ENCODE measurements at regions of chr5 and their contacts with region 1.

Region 1: DNA sequence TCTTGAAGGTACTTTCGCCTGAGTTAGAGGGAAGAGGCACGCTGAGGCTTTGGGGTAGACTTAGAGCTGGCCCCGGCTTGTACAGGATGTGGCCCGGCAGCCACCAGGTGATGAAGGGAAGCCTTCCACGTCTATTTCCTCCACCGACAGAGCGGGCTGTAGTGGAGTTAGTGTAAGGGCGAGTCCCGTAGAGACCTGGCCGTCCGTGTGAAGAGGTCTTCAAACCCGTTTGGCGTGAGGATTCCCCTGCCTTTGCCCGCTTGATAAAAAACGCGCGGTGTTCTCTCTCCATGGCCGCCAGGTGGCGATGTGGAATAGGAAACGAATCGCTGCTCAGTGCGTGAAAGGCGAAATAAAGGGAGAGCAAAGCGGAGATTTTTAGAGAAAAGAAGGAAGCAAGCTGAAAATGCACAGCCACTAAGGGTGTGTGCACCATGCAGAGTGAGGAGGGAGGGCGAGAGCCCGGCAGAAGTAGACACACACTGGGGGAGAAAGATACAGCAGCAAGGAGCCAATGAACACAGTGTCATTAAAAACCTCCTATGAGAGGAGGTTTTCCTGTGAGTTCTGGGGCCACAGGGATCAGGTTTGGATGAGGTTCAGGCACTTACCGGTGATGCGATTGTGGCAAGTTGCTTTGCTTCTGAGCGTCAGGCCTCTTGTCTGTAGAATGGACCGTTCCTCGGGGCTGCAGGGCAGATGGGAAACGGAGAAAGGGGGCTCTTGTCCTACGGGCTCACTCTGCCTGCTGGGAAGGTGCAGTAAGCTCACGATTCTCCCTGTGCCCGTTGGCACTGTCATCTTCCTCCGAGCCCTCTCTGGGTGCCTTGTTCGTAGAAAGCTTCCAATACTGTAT is 34.2 kb downstream of the STC2 start:
- DNase-seq: peak; percentile 78
- H3K4me3 Mint-ChIP-seq: peak overlapping the region; percentile 4
- H3K27ac Mint-ChIP-seq: no peak overlapping the region
- H3K4me1 Mint-ChIP-seq: peaks cover 16% of the 10 kb centered on the region
- H3K27me3 Mint-ChIP-seq: peaks cover 89% of the 10 kb centered on the region

Region 2: DNA sequence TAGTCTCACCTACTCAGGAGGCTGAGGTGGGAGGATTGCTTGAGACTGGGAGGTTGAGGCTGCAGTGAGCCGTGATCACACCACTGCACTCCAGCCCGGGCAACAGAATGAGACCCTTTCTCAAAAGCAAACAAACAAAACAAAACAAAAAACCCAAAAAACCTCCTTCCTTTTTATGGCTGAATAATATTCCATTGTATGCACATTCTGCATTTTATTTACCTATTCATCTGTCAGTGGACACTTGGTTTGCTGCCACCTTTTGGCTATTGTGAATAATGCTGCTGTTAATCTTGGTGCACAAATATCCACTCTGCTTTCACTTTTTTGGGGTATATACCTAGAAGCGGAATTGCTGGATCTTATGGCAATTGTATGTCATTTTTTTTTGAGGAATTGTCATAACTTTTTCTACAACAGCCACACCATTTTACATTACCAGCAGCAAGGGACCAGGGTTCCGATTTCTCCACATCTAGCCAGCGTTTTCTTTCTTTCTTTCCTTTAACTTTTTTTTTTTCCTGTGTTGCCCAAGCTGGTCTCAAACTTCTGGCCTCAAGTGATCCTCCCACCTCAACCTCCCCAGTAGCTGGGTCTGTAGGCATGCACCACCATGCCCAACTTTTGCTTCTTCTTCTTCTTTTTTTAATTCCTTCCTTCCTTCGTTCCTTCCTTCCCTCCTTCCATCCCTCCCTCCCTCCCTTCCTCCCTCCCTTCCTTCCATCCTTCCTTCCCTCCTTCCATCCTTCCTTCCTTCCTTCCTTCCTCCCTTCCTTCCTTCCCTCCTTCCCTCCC is 89.7 kb before region 1 on chr5:
- CTCF ChIA-PET with region 1: no interaction called
- DNase-seq: peak; percentile 43
- H3K4me3 Mint-ChIP-seq: no peak overlapping the region
- H3K27ac Mint-ChIP-seq: no peak overlapping the region
- H3K4me1 Mint-ChIP-seq: no peaks in the 10 kb centered on the region
- H3K27me3 Mint-ChIP-seq: peaks cover 63% of the 10 kb centered on the region

Region 3: GRCh38 chr5:173238312-173239232 is 55.5 kb before region 1 on chr5:
- CTCF ChIA-PET with region 1: no interaction called
- DNase-seq: no peak
- H3K4me3 Mint-ChIP-seq: peak overlapping the region; percentile 6
- H3K27ac Mint-ChIP-seq: peak overlapping the region; percentile 81
- H3K4me1 Mint-ChIP-seq: peaks cover 30% of the 10 kb centered on the region
- H3K27me3 Mint-ChIP-seq: peaks cover 93% of the 10 kb centered on the region

Region 4: DNA sequence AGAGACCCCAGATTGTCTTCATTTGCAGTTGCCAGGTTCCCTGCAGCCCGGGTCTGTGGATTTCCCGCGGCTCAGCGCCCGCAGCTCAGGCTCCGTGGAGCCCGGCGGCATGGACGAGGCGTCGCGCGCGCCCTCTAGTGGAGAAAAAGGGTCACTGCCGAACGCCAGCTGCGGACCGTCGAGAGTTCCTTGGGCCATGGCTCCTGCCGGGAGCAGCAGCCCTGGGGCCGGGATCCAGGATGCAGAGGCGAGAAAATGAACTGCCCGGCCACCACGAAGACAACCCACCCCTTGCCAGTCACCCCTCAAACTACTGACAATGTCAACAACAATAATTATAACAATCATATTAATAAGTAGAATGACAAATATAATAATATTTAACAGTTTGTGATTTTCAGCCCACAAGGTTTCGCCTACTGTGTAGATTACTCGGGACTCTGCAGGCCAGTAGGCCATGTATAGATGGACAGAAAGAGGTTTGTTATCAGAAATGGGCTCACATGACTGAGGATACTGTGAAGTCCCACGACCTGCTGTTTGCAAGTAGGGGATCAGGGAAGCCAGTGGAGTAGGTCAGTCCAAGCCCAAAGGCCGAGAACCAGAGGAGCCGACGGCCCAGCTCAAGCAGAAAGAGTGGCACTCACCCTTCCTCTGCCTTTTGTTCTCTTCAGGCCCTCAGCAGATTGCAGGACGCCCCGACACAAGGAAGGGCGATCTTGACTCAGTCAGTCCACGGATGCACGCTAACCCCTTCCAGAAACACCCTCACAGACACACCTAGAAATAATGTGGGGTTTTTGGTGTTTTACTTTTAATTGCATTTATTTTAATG is 279.3 kb after region 1 on chr5:
- CTCF ChIA-PET with region 1: interaction called, 20 read pairs
- DNase-seq: peak; percentile 68
- H3K4me3 Mint-ChIP-seq: no peak overlapping the region
- H3K27ac Mint-ChIP-seq: no peak overlapping the region
- H3K4me1 Mint-ChIP-seq: peaks cover 3% of the 10 kb centered on the region
- H3K27me3 Mint-ChIP-seq: peaks cover 23% of the 10 kb centered on the region